Activated CD4-positive, alpha-beta memory T cell treated with anti-CD3 and anti-CD28 coated beads for 36 hours (primary cell): ENCODE measurements at regions of chr20 and their contacts with region 1.

Region 1: GRCh38 chr20:24992487-24993205 is at the start of gene APMAP:
- DNase-seq: peak; percentile 97
- H3K4me3 Mint-ChIP-seq: peak within 1 kb of the TSS; percentile 95
- H3K27ac Mint-ChIP-seq: peak within 1 kb of the TSS; percentile 87
- H3K4me1 Mint-ChIP-seq: peaks cover 54% of the 10 kb centered on the region
- H3K27me3 Mint-ChIP-seq: no peaks in the 10 kb centered on the region
- total RNA-seq, gene APMAP: 45.5 to 46.6 TPM

Region 2: DNA sequence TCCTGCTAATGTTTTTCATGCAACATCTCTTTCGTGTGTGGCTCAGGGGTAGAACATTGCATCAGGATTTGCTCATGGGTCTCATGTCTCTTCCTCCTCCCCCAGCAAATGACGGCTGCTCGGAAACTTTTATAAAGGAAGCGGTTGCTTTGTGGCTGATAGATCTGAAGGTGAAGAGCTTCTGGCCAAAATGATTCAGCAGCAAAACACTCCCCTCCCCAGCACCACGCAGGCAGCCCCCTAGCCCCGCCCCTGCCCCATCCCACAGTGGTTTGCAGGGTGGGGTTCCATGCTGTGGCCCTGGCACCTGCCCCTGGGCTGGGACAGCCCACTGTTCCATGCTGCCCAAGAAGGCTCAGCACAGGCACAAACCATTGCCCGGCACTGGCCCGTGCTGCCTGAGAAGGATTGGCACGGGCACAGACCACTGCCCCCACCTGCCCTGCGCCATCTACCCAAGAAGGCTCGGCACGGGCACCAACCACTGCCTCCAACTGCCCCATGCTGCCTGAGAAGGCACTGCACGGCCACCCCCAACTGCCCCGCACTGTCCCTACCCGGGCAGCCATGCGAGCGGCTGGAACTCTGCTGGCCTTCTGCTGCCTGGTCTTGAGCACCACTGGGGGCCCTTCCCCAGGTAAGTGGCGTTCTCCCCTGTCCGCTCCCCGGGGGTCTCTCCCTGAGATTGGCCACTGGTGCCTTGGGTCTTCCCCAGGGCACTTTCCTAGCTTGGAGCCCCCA is 43.5 kb before region 1 on chr20 and contains the start of gene CST7:
- CTCF ChIA-PET with region 1: no interaction called
- POLR2A ChIA-PET with region 1: interaction called, 3 read pairs
- intact Hi-C with region 1: loop called (anchors 2 kb)
- DNase-seq: peak; percentile 93
- H3K4me3 Mint-ChIP-seq: peak within 1 kb of the TSS; percentile 83
- H3K27ac Mint-ChIP-seq: peak within 1 kb of the TSS; percentile 96
- H3K4me1 Mint-ChIP-seq: peaks cover 50% of the 10 kb centered on the region
- H3K27me3 Mint-ChIP-seq: no peaks in the 10 kb centered on the region
- total RNA-seq, gene CST7: 81.8 to 83.1 TPM

Region 3: DNA sequence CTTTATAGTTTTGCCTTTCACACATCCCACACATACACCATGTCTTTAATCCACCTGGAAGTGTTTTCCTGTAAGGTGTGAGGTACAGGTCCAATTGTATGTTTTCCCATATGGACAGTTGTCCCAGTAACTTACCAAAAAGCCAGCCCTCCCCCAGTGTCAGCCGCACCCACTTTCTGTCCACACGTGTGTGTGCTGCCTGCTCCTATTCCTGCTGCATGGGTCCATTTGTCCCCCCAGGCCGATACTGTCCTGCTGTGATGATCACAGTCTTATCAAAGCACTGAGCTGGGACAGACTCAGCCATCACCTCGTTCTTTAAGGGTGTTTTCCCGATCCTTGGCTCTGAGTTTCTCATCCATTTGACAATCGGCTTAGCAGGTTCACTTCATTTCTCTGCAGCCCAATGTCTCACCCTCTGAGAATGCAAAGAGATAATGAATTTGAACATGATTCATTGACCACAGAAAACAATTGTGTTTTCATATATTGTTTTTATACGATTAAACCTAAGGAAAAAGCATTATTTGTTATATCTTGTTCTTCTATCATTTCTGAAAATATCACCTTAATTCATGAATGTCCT is 79.7 kb after region 1 on chr20:
- CTCF ChIA-PET with region 1: interaction called, 14 read pairs
- POLR2A ChIA-PET with region 1: no interaction called
- intact Hi-C with region 1: no loop called
- DNase-seq: no peak
- H3K4me3 Mint-ChIP-seq: no peak overlapping the region
- H3K27ac Mint-ChIP-seq: no peak overlapping the region
- H3K4me1 Mint-ChIP-seq: peaks cover 6% of the 10 kb centered on the region
- H3K27me3 Mint-ChIP-seq: peaks cover 41% of the 10 kb centered on the region

Region 4: DNA sequence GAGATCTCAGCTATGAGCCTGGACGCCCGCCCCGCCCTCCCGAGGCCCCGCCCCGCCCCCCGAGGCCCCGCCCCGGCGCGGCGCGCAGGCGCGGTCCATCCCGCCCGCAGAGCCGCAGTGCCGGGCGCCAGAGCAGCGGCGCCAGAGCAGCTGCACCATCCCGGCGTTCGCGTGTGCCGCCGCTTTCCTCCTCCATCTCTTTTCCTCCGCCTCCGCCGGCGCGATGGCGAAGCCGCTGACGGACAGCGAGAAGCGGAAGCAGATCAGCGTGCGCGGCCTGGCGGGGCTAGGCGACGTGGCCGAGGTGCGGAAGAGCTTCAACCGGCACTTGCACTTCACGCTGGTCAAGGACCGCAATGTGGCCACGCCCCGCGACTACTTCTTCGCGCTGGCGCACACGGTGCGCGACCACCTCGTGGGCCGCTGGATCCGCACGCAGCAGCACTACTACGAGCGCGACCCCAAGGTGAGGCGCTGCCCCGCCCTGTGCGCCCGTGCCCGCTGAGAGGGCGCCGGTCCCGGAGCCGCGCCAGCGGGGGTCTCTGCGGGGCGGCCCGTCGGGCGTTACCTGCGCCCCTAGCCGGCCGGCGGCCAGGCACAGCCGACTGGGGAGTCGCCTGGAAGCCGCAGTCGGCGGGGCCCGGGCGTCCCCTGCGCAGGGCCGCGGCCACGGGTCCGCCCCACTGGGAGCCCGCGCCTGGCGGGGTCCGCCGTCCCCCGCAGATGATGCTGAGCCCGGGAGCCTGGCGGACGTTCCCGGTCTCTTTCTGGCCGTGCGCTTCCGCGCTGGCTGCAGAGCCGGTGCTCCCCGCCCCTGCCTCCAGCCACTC is 255.5 kb after region 1 on chr20 and contains the start of gene PYGB:
- CTCF ChIA-PET with region 1: interaction called, 3 read pairs
- POLR2A ChIA-PET with region 1: interaction called, 3 read pairs
- intact Hi-C with region 1: loop called (anchors 2 kb)
- DNase-seq: peak; percentile 81
- H3K4me3 Mint-ChIP-seq: peak within 1 kb of the TSS; percentile 91
- H3K27ac Mint-ChIP-seq: peak within 1 kb of the TSS; percentile 88
- H3K4me1 Mint-ChIP-seq: peaks cover 50% of the 10 kb centered on the region
- H3K27me3 Mint-ChIP-seq: no peaks in the 10 kb centered on the region
- total RNA-seq, gene PYGB: 23.4 to 24.0 TPM

Region 5: GRCh38 chr20:25399037-25399430 is 406.4 kb after region 1 on chr20:
- CTCF ChIA-PET with region 1: interaction called, 21 read pairs
- POLR2A ChIA-PET with region 1: no interaction called
- intact Hi-C with region 1: loop called (anchors 5 kb)
- DNase-seq: peak; percentile 23
- H3K4me3 Mint-ChIP-seq: no peak overlapping the region
- H3K27ac Mint-ChIP-seq: no peak overlapping the region
- H3K4me1 Mint-ChIP-seq: no peaks in the 10 kb centered on the region
- H3K27me3 Mint-ChIP-seq: no peaks in the 10 kb centered on the region